Right ventricle myocardium inferior (tissue), 1 donor: ENCODE measurements at regions of chr7 and their contacts with region 1.

Region 1: GRCh38 chr7:46776790-46777189 is 805.1 kb downstream of the TNS3 start:
- DNase-seq: no peak
- ATAC-seq: no peak

Region 2: GRCh38 chr7:46301677-46302076 is 475.1 kb before region 1 on chr7:
- intact Hi-C with region 1: no loop called
- DNase-seq: no peak
- ATAC-seq: no peak

Region 3: DNA sequence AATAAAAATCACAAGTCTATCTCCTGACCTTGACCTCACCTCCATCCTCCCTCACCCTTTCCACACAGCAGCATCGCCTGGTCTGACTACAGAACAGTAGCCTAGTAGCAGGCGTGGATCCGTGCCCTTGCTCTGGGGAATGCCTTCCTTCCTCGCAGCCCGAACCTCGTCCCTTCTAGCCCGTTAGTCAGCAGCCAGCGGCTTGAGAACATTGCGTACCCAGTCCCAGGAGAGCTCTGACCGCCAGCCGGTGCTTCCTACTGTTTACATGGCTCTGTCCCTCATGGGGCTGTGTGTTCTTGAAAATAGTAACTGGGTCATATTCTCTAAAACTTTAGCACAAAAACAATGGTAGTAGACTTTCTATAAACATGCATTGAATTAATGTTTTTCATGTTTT is 173.0 kb before region 1 on chr7:
- intact Hi-C with region 1: loop called (anchors 10 kb)
- DNase-seq: peak; percentile 94
- ATAC-seq: peak; percentile 92

Region 4: DNA sequence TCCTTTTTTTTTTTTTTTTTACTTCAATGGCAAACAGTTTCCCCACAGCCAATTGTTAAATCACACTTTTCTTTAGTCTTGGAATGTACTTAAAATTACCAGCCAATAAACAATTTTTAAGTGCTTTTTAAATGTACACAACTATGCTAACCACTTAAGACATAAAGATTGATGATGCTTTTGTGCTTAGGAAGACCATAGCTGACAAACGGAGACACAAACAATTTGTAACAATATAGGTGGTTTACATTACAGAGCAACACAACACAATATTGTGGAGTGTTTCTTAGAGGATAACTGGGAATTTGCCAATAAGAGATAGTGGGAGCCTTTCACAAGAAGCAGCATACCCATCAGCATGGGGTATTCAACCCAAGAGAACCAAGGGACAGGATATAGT is 57.2 kb before region 1 on chr7:
- intact Hi-C with region 1: loop called (anchors 2 kb)
- DNase-seq: no peak
- ATAC-seq: no peak

Region 5: GRCh38 chr7:46752881-46753366 is 23.9 kb before region 1 on chr7:
- intact Hi-C with region 1: no loop called
- DNase-seq: no peak
- ATAC-seq: no peak

Region 6: GRCh38 chr7:47045207-47046051 is 268.6 kb after region 1 on chr7:
- intact Hi-C with region 1: loop called (anchors 10 kb)
- DNase-seq: peak; percentile 67
- ATAC-seq: peak; percentile 76

Region 7: GRCh38 chr7:47100817-47101435 is 324.1 kb after region 1 on chr7:
- intact Hi-C with region 1: no loop called
- DNase-seq: no peak
- ATAC-seq: no peak

Region 8: GRCh38 chr7:47254081-47255006 is 477.6 kb after region 1 on chr7:
- intact Hi-C with region 1: loop called (anchors 10 kb)
- DNase-seq: peak; percentile 94
- ATAC-seq: peak; percentile 95